Activated B cell treated with CpG ODN at 0.5 μM for 24 hours (primary cell): ENCODE measurements at regions of chr2 and their contacts with region 1.

Region 1: GRCh38 chr2:237923481-237924163 is 43.2 kb upstream of the UBE2F start:
- DNase-seq: peak; percentile 80
- ATAC-seq: peak; percentile 100
- H3K4me3 Mint-ChIP-seq: peak overlapping the region; percentile 55
- H3K27ac Mint-ChIP-seq: peak overlapping the region; percentile 35
- H3K4me1 Mint-ChIP-seq: peaks cover 14% of the 10 kb centered on the region
- H3K27me3 Mint-ChIP-seq: peaks cover 1% of the 10 kb centered on the region
- CTCF ChIP-seq: peak; percentile 81

Region 2: DNA sequence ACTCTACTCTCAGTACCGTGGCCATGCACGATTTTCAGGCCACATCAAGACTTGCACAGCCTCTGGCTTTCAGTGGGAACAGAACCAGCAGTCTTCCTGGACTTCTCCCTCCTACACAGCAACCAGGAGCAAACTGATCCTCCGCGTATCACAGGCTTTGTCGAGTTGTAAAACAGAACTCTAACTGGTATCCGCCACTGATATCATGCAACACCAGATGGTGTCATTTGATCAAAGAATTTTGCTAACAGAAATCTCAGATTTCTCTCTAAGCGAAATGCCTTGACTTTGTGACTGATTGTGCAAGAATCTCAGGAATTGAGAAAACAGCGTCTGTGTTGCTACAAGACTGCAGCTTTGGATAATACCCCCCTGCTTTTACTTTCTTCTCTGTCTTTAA is 752.2 kb before region 1 on chr2:
- CTCF ChIA-PET with region 1: no interaction called
- POLR2A ChIA-PET with region 1: no interaction called
- intact Hi-C with region 1: no loop called
- DNase-seq: no peak
- ATAC-seq: no peak
- H3K4me3 Mint-ChIP-seq: no peak overlapping the region
- H3K27ac Mint-ChIP-seq: no peak overlapping the region
- H3K4me1 Mint-ChIP-seq: no peaks in the 10 kb centered on the region
- H3K27me3 Mint-ChIP-seq: peaks cover 3% of the 10 kb centered on the region
- CTCF ChIP-seq: no peak

Region 3: GRCh38 chr2:237858294-237859081 is 65.1 kb before region 1 on chr2:
- CTCF ChIA-PET with region 1: interaction called, 4 read pairs
- POLR2A ChIA-PET with region 1: no interaction called
- intact Hi-C with region 1: loop called (anchors 2 kb)
- DNase-seq: no peak
- ATAC-seq: peak; percentile 73
- H3K4me3 Mint-ChIP-seq: peak overlapping the region; percentile 47
- H3K27ac Mint-ChIP-seq: no peak overlapping the region
- H3K4me1 Mint-ChIP-seq: peaks cover 7% of the 10 kb centered on the region
- H3K27me3 Mint-ChIP-seq: peaks cover 45% of the 10 kb centered on the region
- CTCF ChIP-seq: no peak

Region 4: DNA sequence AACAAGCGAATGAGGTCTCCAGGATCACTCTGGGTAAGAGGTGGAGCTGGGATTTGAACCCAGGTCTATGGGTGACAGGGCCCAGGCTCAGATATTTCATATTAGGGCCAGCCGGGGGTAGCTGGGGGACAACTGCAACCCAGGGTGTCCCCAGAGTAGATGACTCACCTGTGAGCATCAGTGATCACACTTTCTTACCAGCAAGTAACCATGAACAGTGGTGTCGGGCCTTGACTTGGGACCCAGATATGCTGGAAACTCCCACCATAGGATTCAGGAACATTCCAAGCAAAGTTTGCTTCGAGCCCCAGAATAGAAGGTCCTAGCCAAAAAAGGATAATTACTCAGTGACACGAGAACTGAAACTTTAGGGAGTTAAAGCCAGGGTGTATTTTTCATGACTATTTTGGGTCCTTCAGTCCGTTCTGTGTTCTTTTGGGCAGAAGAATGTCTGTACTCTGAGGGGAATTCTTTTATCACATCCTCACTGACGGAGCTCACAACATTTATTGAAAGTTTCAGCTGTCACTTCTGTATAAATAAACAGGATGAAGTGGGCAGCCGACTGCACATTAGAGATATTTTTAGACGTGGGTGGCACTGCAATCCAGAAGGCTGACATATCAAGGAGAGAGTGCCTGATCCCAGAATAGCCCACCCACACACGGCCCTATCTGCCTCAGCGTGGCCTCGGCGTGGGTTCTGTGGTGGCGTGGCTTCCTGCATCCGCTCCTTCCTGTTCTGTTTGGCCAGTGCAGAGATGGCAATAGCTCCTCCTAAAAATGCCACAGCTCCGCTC is 18.6 kb before region 1 on chr2:
- CTCF ChIA-PET with region 1: no interaction called
- POLR2A ChIA-PET with region 1: interaction called, 10 read pairs
- intact Hi-C with region 1: no loop called
- DNase-seq: no peak
- ATAC-seq: peak; percentile 72
- H3K4me3 Mint-ChIP-seq: peak overlapping the region; percentile 55
- H3K27ac Mint-ChIP-seq: peak overlapping the region; percentile 88
- H3K4me1 Mint-ChIP-seq: peaks cover 42% of the 10 kb centered on the region
- H3K27me3 Mint-ChIP-seq: no peaks in the 10 kb centered on the region
- CTCF ChIP-seq: no peak

Region 5: DNA sequence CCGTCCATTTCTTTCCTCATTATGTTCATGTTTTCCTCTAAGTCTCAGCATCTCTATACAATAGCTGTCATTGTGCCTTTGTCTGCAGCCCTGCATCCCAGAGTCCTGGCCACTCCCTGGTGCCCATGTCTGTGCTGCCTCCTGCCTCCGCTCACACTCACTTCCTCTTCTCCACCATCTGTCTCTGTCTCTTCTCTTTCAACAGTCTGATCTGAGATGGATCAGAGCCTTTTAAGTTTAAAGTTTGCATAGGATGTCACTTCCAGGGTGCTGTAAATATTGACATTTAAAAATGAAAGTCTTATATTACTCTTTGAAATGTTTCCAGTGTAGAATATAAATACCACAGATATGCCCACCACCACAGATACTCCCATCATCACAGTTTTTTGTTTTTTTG is 85.9 kb after region 1 on chr2:
- CTCF ChIA-PET with region 1: no interaction called
- POLR2A ChIA-PET with region 1: no interaction called
- intact Hi-C with region 1: no loop called
- DNase-seq: no peak
- ATAC-seq: no peak
- H3K4me3 Mint-ChIP-seq: no peak overlapping the region
- H3K27ac Mint-ChIP-seq: no peak overlapping the region
- H3K4me1 Mint-ChIP-seq: peaks cover 2% of the 10 kb centered on the region
- H3K27me3 Mint-ChIP-seq: no peaks in the 10 kb centered on the region
- CTCF ChIP-seq: no peak

Region 6: GRCh38 chr2:238106686-238107524 is 183.3 kb after region 1 on chr2:
- CTCF ChIA-PET with region 1: no interaction called
- POLR2A ChIA-PET with region 1: no interaction called
- intact Hi-C with region 1: loop called (anchors 2 kb)
- DNase-seq: peak; percentile 15
- ATAC-seq: no peak
- H3K4me3 Mint-ChIP-seq: peak overlapping the region; percentile 88
- H3K27ac Mint-ChIP-seq: peak overlapping the region; percentile 86
- H3K4me1 Mint-ChIP-seq: peaks cover 35% of the 10 kb centered on the region
- H3K27me3 Mint-ChIP-seq: no peaks in the 10 kb centered on the region
- CTCF ChIP-seq: no peak

Region 7: DNA sequence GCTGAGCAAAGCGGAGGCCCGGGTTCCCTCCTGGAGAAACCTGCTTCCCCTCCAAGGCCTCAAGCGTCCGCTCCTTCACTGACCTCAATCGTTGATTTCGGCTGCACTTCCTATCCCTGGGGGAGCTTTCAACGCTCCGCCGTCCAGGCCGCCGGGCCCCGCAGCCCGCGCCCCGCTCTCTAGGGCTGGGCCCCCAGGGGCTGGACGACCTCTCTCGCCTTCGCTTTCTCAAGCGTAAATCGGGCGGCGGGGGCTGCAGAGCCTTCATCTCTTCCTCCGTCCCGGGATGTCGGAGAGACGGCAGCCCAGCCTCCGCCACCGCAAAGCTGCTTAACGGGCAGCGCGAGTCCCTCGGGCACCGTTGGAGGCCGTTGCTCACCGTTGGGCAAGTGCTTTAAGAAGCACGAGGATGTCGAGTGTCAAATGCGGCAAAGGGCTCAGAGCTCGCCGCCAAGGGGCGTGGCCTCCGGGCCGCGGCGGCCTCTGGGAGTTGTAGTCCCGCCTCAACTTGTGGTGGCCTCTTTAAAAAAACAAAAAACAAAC is 307.7 kb after region 1 on chr2:
- CTCF ChIA-PET with region 1: no interaction called
- POLR2A ChIA-PET with region 1: no interaction called
- intact Hi-C with region 1: loop called (anchors 5 kb)
- DNase-seq: peak; percentile 76
- ATAC-seq: peak; percentile 84
- H3K4me3 Mint-ChIP-seq: peak overlapping the region; percentile 90
- H3K27ac Mint-ChIP-seq: no peak overlapping the region
- H3K4me1 Mint-ChIP-seq: peaks cover 16% of the 10 kb centered on the region
- H3K27me3 Mint-ChIP-seq: peaks cover 17% of the 10 kb centered on the region
- CTCF ChIP-seq: no peak